ENCODE measurements at regions of chr20 and their contacts with region 1.

Region 1: GRCh38 chr20:23132930-23133559 is 46.9 kb upstream of the CD93 start:
- DNase-seq: peak in 4 of 5 donors; percentile 70 to 80 (median 74)
- ATAC-seq: peak; percentile 62 to 90 (median 79)
- H3K4me3 ChIP-seq: peak overlapping the region in 1 of 12 donors; percentile 3
- H3K27ac ChIP-seq: peak overlapping the region; percentile 23 to 86 (median 76)
- H3K4me1 ChIP-seq: peaks cover 3 to 86% (median 41%) of the 10 kb centered on the region in 12 donors
- H3K27me3 ChIP-seq: no peaks in the 10 kb centered on the region
- CTCF ChIP-seq: no peak
- POLR2A ChIP-seq: no peak

Region 2: DNA sequence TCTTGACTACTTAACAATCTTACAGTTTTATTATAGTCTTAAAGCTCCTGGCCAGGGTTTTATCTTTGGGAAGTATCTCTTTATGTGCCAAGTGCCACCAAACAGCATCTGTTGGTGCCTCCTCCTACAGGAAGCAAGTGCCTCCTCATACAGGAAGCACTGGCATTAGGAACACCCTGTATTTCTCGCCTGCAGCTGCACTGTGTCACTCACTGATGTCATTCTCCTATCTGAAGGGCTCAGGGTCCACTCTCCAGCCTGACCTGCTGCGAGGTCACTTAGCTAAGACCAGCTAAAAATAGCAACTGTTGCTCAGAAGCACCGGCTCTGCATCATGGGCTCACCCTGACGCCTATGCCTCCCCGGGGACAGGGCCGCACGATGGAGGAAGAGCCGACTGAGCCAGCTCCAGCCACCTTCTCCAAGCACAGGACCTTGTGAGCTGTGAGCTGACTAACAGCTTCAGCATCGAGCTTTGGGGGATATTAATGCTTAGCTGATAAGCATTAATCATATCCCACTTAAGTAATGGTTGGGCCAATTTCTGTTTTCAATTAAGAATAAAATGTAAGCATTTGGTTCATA is 19.4 kb after region 1 on chr20:
- intact Hi-C with region 1: loop called in 1 of 10 experiments (anchors 2 kb)
- DNase-seq: peak; percentile 87 to 95 (median 87)
- ATAC-seq: peak; percentile 94 to 96 (median 94)
- H3K4me3 ChIP-seq: no peak overlapping the region
- H3K27ac ChIP-seq: peak overlapping the region; percentile 58 to 89 (median 81)
- H3K4me1 ChIP-seq: peaks cover 3 to 93% (median 58%) of the 10 kb centered on the region in 12 donors
- H3K27me3 ChIP-seq: no peaks in the 10 kb centered on the region
- CTCF ChIP-seq: peak in 1 of 12 donors; percentile 18
- POLR2A ChIP-seq: peak in 1 of 2 donors; percentile 29

Measured in heart left ventricle (tissue), 16 donors.